ENCODE measurements at regions of chr17 and their contacts with region 1.

Region 1: GRCh38 chr17:69235338-69235930 is 6.8 kb upstream of the ABCA10 start:
- DNase-seq: peak in 9 of 10 donors; percentile 33 to 94 (median 70)

Region 2: DNA sequence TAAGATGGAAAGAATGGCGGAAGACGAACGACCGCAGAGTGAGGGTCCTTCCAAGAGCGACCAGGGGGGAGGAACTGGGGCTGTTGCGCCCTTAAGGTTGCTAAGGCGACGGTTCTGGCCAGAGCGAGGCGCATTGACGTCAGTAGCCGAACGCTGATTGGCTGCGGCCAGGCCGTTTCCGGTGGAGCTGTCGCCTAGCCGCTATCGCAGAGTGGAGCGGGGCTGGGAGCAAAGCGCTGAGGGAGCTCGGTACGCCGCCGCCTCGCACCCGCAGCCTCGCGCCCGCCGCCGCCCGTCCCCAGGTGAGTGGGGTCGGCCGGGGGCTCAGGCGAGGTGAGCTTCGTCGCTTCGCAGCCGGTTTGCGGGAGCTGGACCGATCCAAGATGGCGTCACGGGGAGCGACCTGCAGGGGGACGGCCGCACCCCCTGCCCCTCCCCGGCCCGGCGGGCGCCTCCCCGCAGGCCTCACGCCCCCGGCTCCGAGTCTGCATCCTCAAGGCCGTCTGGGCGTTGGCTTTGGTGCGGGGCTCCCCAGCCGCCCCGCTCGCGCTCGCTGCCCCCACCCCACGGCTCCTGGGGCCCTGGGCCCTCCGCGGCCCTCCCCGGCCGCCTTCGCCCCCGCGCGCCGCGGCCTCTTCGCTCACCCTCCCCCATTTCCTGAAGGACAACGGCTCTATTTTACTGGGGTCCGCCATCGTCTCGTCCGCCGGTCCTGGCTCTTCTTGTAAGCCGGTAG is 723.0 kb before region 1 on chr17 and contains the start of gene PRKAR1A:
- intact Hi-C with region 1: loop called (anchors 10 kb)
- DNase-seq: peak; percentile 95 to 100 (median 99)

Region 3: DNA sequence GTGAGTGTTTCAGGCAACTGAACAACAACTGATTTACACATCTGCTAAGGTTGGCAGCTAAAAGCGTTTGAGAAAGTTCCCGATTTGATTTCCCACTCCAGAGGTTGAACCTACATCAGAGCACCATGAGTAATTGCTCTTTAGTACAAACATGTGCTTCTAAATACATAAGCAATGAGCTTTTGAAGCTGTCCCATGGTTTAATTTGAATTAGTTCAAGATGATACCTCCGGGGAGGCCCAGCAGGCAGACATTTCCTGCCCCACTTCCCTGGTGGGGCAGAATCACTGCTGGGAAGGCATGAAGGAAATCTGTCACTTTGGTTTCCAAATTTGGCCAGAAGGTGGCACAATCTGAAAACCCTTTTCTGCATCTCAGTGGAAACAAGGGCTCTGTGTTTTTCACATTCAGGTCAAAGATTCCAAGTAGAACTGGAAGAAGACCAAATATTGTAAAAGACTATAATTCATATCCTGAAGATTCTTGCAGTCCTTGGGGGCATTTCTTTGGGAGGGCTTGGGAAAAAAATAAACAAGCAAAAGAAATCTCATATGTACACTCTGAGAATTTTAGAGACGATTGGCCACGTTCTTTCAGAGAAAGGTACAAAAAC is 458.1 kb before region 1 on chr17:
- intact Hi-C with region 1: loop called (anchors 1 kb)
- DNase-seq: peak in 5 of 10 donors; percentile 10 to 70 (median 53)

Region 4: GRCh38 chr17:68972119-68972704 is 263.2 kb before region 1 on chr17:
- intact Hi-C with region 1: loop called (anchors 5 kb)
- DNase-seq: peak in 1 of 10 donors; percentile 24

Region 5: DNA sequence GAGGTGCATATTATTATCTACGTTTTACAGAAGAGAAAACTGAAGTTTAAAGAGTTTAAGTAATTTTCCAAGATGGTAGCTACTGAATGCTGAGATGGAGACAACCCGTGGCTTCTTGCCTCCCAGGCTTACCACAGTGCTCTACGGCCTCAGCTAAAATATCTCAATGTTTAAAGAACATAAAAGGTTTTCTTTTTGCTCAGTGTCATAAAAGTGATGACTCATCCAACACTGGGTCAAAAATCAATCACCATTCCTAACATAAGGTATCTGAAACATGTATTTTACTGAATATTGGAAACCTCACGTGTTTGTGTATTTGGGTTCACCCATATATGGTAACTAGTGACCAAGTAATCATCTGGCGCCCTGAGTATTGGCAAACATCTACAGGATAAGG is 193.1 kb before region 1 on chr17:
- intact Hi-C with region 1: no loop called
- DNase-seq: no peak

Region 6: GRCh38 chr17:69060822-69061221 is 174.6 kb before region 1 on chr17 and contains the start of gene ABCA9:
- intact Hi-C with region 1: loop called (anchors 10 kb)
- DNase-seq: no peak

Measured in posterior cingulate gyrus (tissue), 11 donors.